K562 (cell line): ENCODE measurements at regions of chr14 and their contacts with region 1.

Region 1: GRCh38 chr14:75560962-75561432 is 17.4 kb upstream of the FLVCR2 start:
- DNase-seq: peak; percentile 62 to 81 (median 74)
- ATAC-seq: peak; percentile 88
- H3K4me3 ChIP-seq: no peak overlapping the region
- H3K27ac ChIP-seq: no peak overlapping the region
- H3K4me1 ChIP-seq: no peaks in the 10 kb centered on the region
- H3K27me3 ChIP-seq: peaks cover 0 to 14% of the 10 kb centered on the region in 2 experiments; a peak in 2 of 5 replicates
- CTCF ChIP-seq: peak; percentile 68 to 82 (median 81)
- EP300 ChIP-seq: no peak
- POLR2A ChIP-seq: no peak
- RAD21 ChIP-seq: peak; percentile 72 to 86

Region 2: GRCh38 chr14:75518625-75519024 is 42.4 kb before region 1 on chr14:
- CTCF ChIA-PET with region 1: no interaction called
- POLR2A ChIA-PET with region 1: no interaction called
- in situ Hi-C with region 1: no loop called
- intact Hi-C with region 1: loop called (anchors 2 kb)
- DNase-seq: peak; percentile 30 to 53 (median 45)
- ATAC-seq: peak; percentile 86
- H3K4me3 ChIP-seq: no peak overlapping the region
- H3K27ac ChIP-seq: no peak overlapping the region
- H3K4me1 ChIP-seq: peaks cover 0 to 13% of the 10 kb centered on the region in 2 experiments; a peak in 3 of 5 replicates
- H3K27me3 ChIP-seq: peaks cover 0 to 18% of the 10 kb centered on the region in 2 experiments; a peak in 2 of 5 replicates
- CTCF ChIP-seq: peak; percentile 57 to 59 (median 59)
- EP300 ChIP-seq: no peak
- POLR2A ChIP-seq: no peak
- RAD21 ChIP-seq: peak; percentile 18 to 63; a peak in 2 of 4 replicates

Region 3: GRCh38 chr14:75861161-75861621 is 300.2 kb after region 1 on chr14:
- CTCF ChIA-PET with region 1: no interaction called
- POLR2A ChIA-PET with region 1: no interaction called
- in situ Hi-C with region 1: no loop called
- intact Hi-C with region 1: no loop called
- DNase-seq: peak; percentile 14 to 39 (median 22)
- ATAC-seq: peak; percentile 79
- H3K4me3 ChIP-seq: no peak overlapping the region
- H3K27ac ChIP-seq: peak overlapping the region; percentile 50; the same call in 2 of the 3 replicates
- H3K4me1 ChIP-seq: peaks cover 0 to 22% of the 10 kb centered on the region in 2 experiments; a peak in 3 of 5 replicates
- H3K27me3 ChIP-seq: no peaks in the 10 kb centered on the region
- CTCF ChIP-seq: no peak
- EP300 ChIP-seq: peak; percentile 15; the same call in 1 of the 2 replicates
- POLR2A ChIP-seq: no peak
- RAD21 ChIP-seq: no peak